ENCODE measurements at regions of chr17 and their contacts with region 1.

Region 1: DNA sequence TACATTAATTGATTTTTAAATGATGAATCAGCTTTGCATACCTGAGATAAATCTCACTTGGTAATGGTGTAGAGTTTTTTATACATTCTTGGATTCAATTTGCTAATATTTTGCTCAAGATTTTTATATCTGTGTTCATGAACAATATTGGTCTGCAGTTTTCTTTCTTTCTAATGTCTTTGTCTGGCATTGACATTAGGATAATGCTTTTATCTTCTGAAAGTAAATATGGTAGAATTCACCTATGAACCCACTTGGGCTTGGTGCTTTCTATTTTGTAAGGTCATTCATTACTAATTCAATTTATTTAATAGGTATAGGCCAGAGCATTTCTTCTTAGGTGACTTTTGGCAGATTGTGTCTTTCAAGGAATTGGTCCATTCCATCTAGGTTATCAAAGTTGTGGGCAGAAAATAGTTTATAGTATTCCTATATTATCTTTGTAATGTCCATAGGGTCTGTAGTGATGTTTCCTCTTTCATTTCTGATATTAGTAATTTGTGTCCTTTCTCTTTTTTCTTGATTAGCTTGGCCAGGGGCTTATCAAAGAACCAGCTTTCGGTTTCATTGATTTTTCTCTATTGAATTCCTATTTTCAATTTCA is 45.6 kb downstream of the NACA2 start:
- DNase-seq: no peak
- ATAC-seq: no peak
- H3K4me3 ChIP-seq: no peak overlapping the region
- H3K27ac ChIP-seq: no peak overlapping the region
- H3K4me1 ChIP-seq: no peaks in the 10 kb centered on the region
- H3K27me3 ChIP-seq: peaks cover 0 to 26% (median 9%) of the 10 kb centered on the region in 9 donors
- CTCF ChIP-seq: no peak
- POLR2A ChIP-seq: no peak

Region 2: DNA sequence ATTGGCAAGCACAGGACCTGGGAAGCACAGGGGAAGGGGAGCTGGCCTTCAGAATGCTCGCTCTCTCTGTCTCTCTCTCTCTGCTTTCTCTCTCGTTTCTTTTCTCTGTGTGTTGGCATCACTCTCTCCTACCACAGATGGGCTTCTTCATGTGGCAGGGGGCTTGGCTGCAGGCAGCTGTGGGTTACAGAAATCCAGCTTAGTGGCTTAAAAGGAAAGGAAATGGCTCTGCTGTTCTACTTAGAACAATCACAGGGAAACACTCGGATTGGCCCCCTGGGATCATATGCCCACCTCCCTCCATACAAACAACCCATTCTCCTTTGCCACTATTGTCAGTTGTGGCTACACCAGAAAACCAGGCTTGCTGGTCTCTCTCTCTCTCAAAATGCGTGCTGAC is 125.4 kb before region 1 on chr17:
- intact Hi-C with region 1: loop called in 7 of 10 experiments (anchors 1 to 5 kb)
- DNase-seq: no peak
- ATAC-seq: no peak
- H3K4me3 ChIP-seq: no peak overlapping the region
- H3K27ac ChIP-seq: no peak overlapping the region
- H3K4me1 ChIP-seq: peaks cover 0 to 21% (median 9%) of the 10 kb centered on the region in 12 donors
- H3K27me3 ChIP-seq: peaks cover 0 to 58% (median 21%) of the 10 kb centered on the region in 9 donors
- CTCF ChIP-seq: no peak
- POLR2A ChIP-seq: no peak